PC-3 (cell line): ENCODE measurements at regions of chr2 and their contacts with region 1.

Region 1: GRCh38 chr2:222594679-222595078 is 61.2 kb downstream of the FARSB start:
- DNase-seq: peak; percentile 55
- ATAC-seq: peak; percentile 100
- H3K4me3 ChIP-seq: no peak overlapping the region
- H3K27ac ChIP-seq: no peak overlapping the region
- H3K4me1 ChIP-seq: peaks cover 6% of the 10 kb centered on the region; the same call in 1 of the 2 replicates
- H3K27me3 ChIP-seq: no peaks in the 10 kb centered on the region
- CTCF ChIP-seq: no peak

Region 2: GRCh38 chr2:222024932-222025880 is 569.5 kb before region 1 on chr2:
- CTCF ChIA-PET with region 1: no interaction called
- POLR2A ChIA-PET with region 1: interaction called, 3 read pairs
- intact Hi-C with region 1: loop called (anchors 1 kb)
- DNase-seq: peak; percentile 57
- ATAC-seq: peak; percentile 73
- H3K4me3 ChIP-seq: no peak overlapping the region
- H3K27ac ChIP-seq: no peak overlapping the region
- H3K4me1 ChIP-seq: no peaks in the 10 kb centered on the region
- H3K27me3 ChIP-seq: peaks cover 12% of the 10 kb centered on the region
- CTCF ChIP-seq: peak; percentile 85

Region 3: DNA sequence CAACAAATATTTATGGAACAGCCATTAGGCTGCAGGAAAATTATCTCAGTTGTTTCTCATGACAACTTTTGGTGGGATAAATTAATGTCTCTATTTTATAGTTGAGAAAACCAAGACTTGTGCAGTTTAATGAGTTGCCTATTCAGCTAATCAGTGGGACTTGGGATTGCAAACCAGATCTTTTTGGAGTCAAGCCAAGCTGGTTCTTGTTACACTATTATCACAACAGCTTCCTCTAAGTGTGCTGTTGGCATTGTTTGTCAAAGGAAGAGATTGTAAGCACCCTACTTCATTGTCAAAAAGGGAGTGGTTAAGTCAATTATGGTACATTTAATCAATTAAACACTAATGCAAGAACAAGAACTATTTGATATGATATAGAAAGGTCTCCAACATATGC is 415.1 kb before region 1 on chr2:
- CTCF ChIA-PET with region 1: interaction called, 13 read pairs
- POLR2A ChIA-PET with region 1: no interaction called
- intact Hi-C with region 1: no loop called
- DNase-seq: no peak
- ATAC-seq: no peak
- H3K4me3 ChIP-seq: no peak overlapping the region
- H3K27ac ChIP-seq: no peak overlapping the region
- H3K4me1 ChIP-seq: no peaks in the 10 kb centered on the region
- H3K27me3 ChIP-seq: peaks cover 47% of the 10 kb centered on the region
- CTCF ChIP-seq: no peak

Region 4: GRCh38 chr2:223084873-223085272 is 490.2 kb after region 1 on chr2:
- CTCF ChIA-PET with region 1: no interaction called
- POLR2A ChIA-PET with region 1: no interaction called
- intact Hi-C with region 1: no loop called
- DNase-seq: no peak
- ATAC-seq: no peak
- H3K4me3 ChIP-seq: no peak overlapping the region
- H3K27ac ChIP-seq: no peak overlapping the region
- H3K4me1 ChIP-seq: no peaks in the 10 kb centered on the region
- H3K27me3 ChIP-seq: no peaks in the 10 kb centered on the region
- CTCF ChIP-seq: no peak